HepG2 (cell line): ENCODE measurements at regions of chr1 and their contacts with region 1.

Region 1: GRCh38 chr1:230153641-230154296 is 86.7 kb downstream of the GALNT2 start:
- DNase-seq: peak; percentile 73
- ATAC-seq: peak; percentile 8; the same call in 1 of the 3 replicates
- H3K4me3 ChIP-seq: peak overlapping the region; percentile 19 to 42 (median 28); a peak in 4 of 6 replicates
- H3K27ac ChIP-seq: peak overlapping the region; percentile 66
- H3K4me1 ChIP-seq: peaks cover 65% of the 10 kb centered on the region
- H3K27me3 ChIP-seq: no peaks in the 10 kb centered on the region
- CTCF ChIP-seq: no peak
- EP300 ChIP-seq: peak; percentile 60 to 84; a peak in 3 of 4 replicates
- POLR2A ChIP-seq: no peak
- RAD21 ChIP-seq: no peak

Region 2: DNA sequence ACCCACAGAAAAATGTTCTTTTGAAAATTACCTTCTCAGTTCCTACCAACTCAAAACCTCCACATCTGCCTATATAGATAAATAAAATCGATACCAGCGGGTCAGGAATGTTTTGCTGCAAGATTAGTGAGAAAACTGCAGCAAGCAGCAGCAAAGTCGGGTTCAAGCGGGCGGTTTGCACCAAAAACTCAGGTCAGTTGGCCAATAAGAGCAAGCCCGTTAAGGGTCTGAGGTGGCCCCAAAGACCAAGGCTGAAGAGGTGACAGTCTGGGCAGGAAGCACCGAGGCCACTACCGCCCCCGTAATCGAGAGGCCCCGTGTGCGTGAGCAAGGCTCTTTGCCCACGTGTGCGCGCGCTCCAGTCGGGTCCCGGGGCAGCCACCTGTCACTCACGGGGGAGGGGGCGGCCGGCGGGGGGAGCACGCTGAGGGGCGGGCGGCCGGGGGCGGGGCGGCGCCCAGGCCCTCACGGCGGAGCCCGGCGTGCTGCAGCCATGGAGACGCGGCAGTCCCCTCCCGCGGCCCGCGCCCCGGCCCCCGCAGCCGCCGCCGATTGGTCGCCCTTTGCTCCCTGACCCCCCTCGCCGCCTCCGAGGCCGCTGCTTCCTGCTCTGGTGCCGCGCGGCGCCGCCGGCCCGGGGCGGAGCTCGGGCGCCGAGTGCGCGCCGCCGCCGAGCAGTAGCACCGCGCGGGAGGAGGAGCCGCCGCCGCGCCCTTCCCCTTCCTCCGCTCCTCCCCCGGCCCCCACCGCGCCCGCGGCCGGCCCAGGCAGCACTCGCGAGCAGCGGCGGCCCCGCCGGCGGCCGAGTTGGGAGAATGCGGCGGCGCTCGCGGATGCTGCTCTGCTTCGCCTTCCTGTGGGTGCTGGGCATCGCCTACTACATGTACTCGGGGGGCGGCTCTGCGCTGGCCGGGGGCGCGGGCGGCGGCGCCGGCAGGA is 87.0 kb before region 1 on chr1 and contains the start of gene GALNT2:
- CTCF ChIA-PET with region 1: no interaction called
- POLR2A ChIA-PET with region 1: interaction called, 3 read pairs
- in situ Hi-C with region 1: no loop called
- intact Hi-C with region 1: loop called (anchors 2 kb)
- DNase-seq: peak; percentile 80
- ATAC-seq: peak; percentile 84
- H3K4me3 ChIP-seq: peak within 1 kb of the TSS; percentile 84 to 93 (median 88)
- H3K27ac ChIP-seq: peak within 1 kb of the TSS; percentile 78
- H3K4me1 ChIP-seq: peaks cover 40% of the 10 kb centered on the region
- H3K27me3 ChIP-seq: no peaks in the 10 kb centered on the region
- CTCF ChIP-seq: peak; percentile 13; the same call in 1 of the 2 replicates
- EP300 ChIP-seq: no peak
- POLR2A ChIP-seq: peak; percentile 42 to 69; a peak in 2 of 4 replicates
- RAD21 ChIP-seq: peak; percentile 57; the same call in 1 of the 2 replicates
- total RNA-seq, gene GALNT2: 18.1 and 39.6 TPM in 2 replicates

Region 3: GRCh38 chr1:230104395-230105244 is 49.1 kb before region 1 on chr1:
- CTCF ChIA-PET with region 1: no interaction called
- POLR2A ChIA-PET with region 1: interaction called, 20 read pairs
- in situ Hi-C with region 1: no loop called
- intact Hi-C with region 1: loop called (anchors 1 kb)
- DNase-seq: peak; percentile 92
- ATAC-seq: peak; percentile 74
- H3K4me3 ChIP-seq: peak overlapping the region; percentile 41 to 67 (median 54)
- H3K27ac ChIP-seq: peak overlapping the region; percentile 82
- H3K4me1 ChIP-seq: peaks cover 70% of the 10 kb centered on the region
- H3K27me3 ChIP-seq: no peaks in the 10 kb centered on the region
- CTCF ChIP-seq: peak; percentile 36
- EP300 ChIP-seq: peak; percentile 46 to 75; a peak in 3 of 4 replicates
- POLR2A ChIP-seq: peak in 1 of 2 experiments; percentile 3; a peak in 1 of 4 replicates
- RAD21 ChIP-seq: no peak; the same call in 1 of the 2 replicates

Region 4: DNA sequence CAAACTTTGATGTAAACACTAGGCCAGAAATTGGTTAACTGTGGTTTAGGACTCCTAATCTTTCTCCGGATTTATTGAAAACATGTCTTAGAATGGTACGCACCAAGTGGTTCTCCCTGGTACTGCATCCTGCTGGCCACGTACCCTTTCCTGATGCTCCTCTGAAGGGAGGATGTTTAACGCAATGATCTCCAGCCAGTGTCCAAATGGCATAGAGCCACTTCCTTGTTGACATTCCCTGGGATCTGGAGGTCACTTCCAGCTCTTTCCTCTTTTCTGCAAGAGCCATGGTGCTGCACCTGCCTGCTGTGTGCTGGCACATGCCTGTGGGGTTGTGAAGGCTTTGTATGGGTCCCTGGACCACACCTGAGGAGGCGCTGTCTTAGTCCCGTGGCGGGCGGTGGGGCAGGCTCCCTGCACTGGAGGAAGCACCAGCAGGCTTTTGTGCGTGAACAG is 32.8 kb before region 1 on chr1:
- CTCF ChIA-PET with region 1: no interaction called
- POLR2A ChIA-PET with region 1: interaction called, 4 read pairs
- in situ Hi-C with region 1: no loop called
- intact Hi-C with region 1: loop called (anchors 2 kb)
- DNase-seq: peak; percentile 51
- ATAC-seq: peak; percentile 93
- H3K4me3 ChIP-seq: no peak overlapping the region
- H3K27ac ChIP-seq: no peak overlapping the region
- H3K4me1 ChIP-seq: peaks cover 51% of the 10 kb centered on the region
- H3K27me3 ChIP-seq: no peaks in the 10 kb centered on the region
- CTCF ChIP-seq: peak; percentile 62
- EP300 ChIP-seq: 0 out of 4 replicates have a peak, but pooled peaks of 1 of the 2 experiments have one; percentile 13
- POLR2A ChIP-seq: no peak
- RAD21 ChIP-seq: no peak

Region 5: DNA sequence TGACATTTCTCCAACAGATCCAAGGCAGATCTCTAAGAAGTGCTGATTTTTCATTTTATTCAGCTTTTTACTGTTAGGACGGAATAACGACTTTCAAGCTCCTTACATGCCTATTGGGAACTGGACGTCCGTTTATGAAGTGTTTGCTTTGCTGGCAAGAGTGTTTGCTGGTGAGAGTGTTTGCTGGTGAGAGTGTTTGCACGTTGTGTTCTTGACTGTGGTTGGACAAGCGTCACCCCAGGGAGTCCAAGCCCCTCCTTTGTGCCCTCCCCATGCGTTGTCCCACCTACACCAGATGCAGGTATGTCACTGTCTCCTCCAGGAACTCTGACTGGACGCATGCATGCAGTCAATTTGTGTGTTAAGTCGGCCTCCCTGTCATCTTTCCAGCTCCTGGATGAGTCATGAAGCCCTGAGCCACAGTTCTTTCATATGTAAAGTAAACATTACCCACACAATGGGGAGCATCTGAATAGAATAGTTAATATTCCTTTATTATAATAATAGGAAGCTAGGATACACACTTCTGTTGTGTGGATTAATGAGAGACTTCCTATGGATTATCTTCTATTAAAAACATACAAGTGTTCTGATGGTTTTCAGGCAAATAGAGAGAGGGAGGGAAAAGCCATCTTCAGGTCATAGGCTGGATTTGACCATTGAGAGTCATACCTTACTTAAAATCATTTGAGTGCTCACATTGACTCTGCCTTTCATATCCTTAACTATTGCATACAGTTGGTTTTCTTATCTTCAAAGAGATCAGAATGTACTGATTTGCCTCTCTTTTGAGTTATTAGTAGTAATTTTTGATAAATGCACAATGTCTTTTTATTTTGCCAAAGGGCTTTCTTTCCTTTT is 32.5 kb after region 1 on chr1:
- CTCF ChIA-PET with region 1: no interaction called
- POLR2A ChIA-PET with region 1: interaction called, 8 read pairs
- in situ Hi-C with region 1: no loop called
- intact Hi-C with region 1: loop called (anchors 1 kb)
- DNase-seq: peak; percentile 95
- ATAC-seq: peak; percentile 99
- H3K4me3 ChIP-seq: peak overlapping the region in 2 of 3 experiments; percentile 21 to 40; a peak in 3 of 6 replicates
- H3K27ac ChIP-seq: peak overlapping the region; percentile 72
- H3K4me1 ChIP-seq: peaks cover 23% of the 10 kb centered on the region
- H3K27me3 ChIP-seq: no peaks in the 10 kb centered on the region
- CTCF ChIP-seq: no peak
- EP300 ChIP-seq: no peak; a peak in 1 of 4 replicates
- POLR2A ChIP-seq: no peak
- RAD21 ChIP-seq: no peak